Aorta (tissue), 5 donors: ENCODE measurements at regions of chr15 and their contacts with region 1.

Region 1: DNA sequence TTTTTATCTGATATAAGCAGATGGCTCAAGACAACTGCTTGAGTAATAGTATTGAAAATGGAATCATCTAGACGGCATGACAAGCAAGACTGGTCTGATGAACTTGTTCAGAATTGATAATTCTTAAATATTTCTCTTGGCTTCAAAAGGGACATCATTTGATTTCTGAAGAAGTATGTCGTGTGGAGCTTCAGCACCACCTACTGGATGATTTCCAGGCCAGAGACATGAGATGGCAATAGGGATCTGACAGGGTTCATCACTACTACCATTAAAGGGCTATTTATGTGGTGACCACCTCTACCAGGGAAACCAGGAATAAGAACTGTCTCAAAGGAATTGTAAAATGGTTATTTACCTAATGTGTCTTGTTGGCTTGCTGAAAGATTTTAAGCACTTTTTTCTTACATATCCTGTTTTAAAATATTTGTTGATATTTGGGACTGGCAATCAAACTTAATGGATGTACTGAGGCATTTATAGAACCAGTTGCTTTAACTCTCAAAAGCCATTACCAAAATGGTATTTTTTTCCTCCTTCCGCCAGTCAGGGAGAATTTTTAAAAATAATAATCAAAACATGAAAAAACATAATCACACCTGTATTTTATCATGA is 99.5 kb upstream of the FAM98B start:
- DNase-seq: peak in 1 of 2 donors; percentile 59
- ATAC-seq: no peak
- H3K4me3 ChIP-seq: no peak overlapping the region
- H3K27ac ChIP-seq: no peak overlapping the region
- H3K4me1 ChIP-seq: no peaks in the 10 kb centered on the region
- H3K27me3 ChIP-seq: no peaks in the 10 kb centered on the region

Region 2: DNA sequence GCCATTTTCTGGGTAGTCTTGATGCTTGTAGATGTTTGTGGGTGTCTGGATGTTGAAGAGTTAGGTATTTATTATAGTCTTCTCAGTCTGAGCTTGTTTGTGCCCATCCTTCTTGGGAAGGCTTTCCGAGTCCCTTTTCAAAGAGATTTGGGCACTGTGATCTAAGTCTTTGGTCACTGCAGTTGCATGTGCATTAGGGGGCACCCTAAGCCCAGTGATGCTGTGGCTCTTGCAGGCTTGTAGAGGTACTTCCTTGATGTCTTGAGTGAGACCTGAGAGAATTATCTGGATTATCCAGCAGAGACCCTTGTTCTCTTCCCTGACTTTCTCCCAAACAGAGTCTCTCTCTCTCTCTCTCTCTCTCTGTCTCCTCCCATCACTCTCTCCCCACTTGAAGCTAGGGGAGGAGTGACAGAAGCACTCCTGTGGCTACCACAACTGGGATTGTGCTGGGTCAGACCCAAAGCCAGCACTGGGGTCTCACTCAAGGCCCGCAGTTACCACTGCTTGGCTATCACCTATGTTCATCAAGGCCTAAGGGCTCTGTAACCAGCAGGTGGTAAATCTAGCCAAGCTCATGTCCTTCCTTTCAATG is 351.4 kb before region 1 on chr15:
- intact Hi-C with region 1: loop called (anchors 5 kb)
- DNase-seq: peak; percentile 75 to 79
- ATAC-seq: no peak
- H3K4me3 ChIP-seq: no peak overlapping the region
- H3K27ac ChIP-seq: no peak overlapping the region
- H3K4me1 ChIP-seq: no peaks in the 10 kb centered on the region
- H3K27me3 ChIP-seq: no peaks in the 10 kb centered on the region

Region 3: DNA sequence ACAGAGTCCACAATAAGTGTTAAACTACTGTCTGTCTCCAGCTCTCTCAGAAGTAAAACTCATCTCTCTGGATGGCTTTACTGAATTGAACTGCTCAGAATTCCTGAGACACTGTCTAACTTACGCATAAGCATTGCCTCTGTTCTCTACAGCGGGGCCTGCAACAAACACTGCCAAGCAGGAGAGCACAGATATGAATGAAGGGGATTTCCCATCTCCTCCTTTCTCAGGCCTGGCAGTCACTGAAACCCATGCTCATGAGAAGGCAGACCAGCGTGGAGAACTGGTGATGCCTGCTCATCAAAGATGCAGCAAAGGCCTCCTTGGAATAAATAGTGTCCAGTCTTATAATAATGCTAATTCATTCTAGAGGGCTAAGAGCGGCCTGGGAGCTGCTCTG is 199.9 kb after region 1 on chr15:
- intact Hi-C with region 1: no loop called
- DNase-seq: no peak
- ATAC-seq: no peak
- H3K4me3 ChIP-seq: no peak overlapping the region
- H3K27ac ChIP-seq: no peak overlapping the region
- H3K4me1 ChIP-seq: no peaks in the 10 kb centered on the region
- H3K27me3 ChIP-seq: no peaks in the 10 kb centered on the region